ENCODE measurements at regions of chr6 and their contacts with region 1.

Region 1: DNA sequence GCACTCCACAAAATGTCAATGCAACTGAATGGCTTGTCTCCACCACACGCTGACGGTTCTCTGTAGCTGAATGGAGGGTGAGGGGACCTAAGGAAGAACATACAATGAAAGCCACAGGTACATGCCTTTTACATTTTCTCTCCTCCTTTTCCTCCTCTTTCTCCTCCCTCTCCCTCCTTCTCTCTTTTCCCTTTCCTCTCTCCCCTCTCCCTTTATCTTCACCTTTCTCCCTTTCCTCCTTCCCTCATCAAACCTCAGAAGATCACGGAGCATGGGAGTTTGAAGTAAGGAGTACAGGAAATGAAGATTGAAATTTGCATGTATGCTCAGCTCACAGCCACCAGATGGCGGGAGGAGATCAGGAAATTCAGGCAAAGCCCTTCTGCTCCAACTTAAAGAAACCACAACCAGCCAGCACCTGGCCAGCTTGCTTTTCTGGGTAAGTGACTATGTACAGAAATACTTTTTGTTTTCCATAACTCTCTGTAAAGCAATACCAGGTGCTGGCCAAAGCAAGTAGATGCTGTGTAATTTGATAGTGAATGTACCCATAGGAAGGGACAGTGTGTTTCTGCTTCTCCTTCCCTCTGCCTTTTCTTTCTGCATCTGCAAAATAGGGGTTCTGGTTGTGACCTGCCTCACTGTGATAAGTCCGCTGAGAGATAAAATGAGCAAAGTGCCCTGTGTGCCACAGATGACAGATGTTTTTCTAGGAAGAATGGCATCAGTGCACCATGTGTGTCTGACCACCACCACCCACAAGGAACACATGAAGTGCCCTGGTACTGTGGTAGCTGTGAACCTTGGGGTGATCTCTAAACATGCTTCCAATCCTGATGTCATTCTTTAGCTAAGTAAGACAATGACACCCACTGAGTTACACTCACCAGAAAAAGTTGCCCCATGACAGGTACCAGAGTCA is 18.6 kb upstream of the FOXO3 start:
- DNase-seq: peak; percentile 69
- ATAC-seq: peak; percentile 87

Region 2: DNA sequence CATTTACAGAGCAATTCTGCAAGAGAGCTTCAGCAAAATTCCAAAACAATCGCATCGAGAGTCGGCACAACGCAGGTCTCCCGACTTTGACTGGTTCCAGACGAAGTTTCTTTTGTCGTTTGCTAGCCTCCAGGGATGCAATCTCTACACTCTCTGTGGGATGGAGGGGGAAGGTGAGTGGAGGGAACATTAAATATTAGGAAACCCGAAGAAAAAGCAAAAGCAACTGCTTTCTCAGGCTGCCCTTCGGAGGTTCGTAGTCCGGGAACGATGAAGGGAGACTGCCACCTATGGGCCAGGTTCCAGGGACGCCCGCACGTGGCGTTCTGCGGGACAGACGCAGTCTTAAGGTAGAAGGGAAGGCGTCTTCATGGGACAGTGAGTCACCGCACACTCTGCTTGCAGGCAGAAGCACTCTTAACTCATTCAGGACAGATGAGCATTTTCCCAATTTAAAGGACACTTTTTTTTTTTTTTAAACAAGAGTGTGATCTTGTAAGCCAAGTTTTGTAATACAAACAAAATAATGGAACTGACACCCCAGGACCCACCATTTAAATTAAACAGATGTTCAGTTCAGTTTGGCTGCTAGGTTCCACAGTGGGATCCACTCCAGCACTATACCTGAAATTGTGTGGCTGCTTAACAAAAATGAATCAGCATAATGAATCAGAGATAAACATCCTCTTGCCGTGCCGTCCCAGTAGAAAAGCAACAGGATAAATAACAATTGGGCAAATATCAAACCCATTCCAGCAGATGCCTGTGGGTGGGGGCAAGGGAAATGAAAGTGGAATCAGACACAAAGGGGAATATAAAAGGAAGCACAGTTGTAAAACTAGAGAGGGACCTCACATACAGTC is 240.3 kb after region 1 on chr6:
- intact Hi-C with region 1: loop called (anchors 5 kb)
- DNase-seq: peak; percentile 87
- ATAC-seq: peak; percentile 95

Region 3: GRCh38 chr6:108835218-108835850 is 293.2 kb after region 1 on chr6:
- intact Hi-C with region 1: loop called (anchors 5 kb)
- DNase-seq: peak; percentile 93
- ATAC-seq: peak; percentile 95

Region 4: DNA sequence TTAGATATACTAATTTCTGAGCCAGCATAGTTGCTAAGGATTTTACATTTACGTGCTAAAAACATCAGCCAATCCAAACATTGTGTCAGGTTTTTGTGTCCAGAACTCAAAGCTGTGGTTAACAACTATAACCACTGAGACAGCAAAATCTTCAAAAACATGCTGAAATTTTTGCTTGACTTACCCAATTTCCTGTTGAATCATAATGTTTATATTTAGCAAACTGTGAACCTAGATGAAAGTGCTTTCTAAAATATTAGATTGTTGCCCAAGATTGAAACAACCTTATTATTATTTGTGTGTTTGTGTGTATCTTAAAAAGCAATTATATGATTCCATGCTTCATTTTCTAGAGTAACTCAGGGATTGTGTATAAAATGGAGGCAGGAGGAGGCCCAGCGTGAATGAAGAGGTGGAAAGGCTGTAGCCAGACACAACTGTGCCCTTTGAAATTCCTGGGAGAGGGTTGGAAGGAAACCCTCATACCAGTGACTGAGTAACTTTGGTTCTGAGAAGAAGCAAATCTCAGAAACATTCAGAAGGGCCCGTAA is 354.1 kb after region 1 on chr6:
- intact Hi-C with region 1: loop called (anchors 5 kb)
- DNase-seq: no peak
- ATAC-seq: peak; percentile 12